ENCODE measurements at regions of chrX and their contacts with region 1.

Region 1: DNA sequence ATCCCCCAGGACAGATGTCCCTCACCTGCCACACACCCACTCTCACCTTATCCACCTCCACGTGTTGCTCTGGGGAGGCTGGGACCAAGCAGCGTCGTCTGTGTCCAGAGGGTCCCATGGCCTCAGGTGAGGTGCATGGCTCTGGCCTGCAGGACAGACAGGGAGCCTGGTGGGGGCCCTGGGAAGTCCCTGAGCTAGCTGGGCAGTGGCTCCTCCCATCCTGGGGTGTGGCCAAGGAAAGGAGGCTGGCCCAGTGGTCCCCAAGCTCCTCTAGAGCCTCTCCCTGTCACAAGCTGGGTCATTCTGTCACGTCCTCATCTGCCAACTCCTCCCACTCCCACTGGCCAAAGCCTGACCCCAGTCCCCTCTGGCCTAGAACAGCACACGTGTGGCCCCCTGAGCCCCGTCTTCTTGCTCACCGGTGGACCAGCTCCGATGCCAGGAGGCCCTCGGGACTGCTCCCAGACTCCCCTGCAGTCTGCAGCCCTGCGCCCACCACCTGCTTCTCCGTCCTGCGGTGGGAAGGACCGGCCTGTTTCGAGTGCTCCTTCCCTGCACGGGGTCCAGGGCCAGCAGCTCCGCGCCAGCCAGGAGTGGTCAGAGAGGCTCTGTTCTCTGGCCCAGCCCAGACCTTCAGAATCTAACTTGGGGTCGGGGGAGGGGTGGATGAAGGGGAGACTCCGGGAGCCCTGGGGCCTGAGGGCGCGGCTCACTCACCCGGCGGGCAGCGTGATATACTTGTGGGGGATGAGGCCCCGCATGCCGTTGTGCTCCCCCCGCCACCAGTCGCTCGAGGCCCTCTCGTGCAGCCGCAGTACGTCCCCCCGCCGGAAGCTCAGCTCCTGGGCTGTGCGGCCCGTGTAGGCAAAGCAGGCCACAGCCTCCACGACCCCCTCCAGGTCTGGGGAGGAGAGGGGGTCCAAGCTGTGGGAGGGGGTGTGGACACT is 4.8 kb downstream of the AVPR2 start:
- H3K4me3 ChIP-seq: no peak overlapping the region
- H3K27ac ChIP-seq: no peak overlapping the region
- H3K4me1 ChIP-seq: no peaks in the 10 kb centered on the region
- CTCF ChIP-seq: no peak

Region 2: DNA sequence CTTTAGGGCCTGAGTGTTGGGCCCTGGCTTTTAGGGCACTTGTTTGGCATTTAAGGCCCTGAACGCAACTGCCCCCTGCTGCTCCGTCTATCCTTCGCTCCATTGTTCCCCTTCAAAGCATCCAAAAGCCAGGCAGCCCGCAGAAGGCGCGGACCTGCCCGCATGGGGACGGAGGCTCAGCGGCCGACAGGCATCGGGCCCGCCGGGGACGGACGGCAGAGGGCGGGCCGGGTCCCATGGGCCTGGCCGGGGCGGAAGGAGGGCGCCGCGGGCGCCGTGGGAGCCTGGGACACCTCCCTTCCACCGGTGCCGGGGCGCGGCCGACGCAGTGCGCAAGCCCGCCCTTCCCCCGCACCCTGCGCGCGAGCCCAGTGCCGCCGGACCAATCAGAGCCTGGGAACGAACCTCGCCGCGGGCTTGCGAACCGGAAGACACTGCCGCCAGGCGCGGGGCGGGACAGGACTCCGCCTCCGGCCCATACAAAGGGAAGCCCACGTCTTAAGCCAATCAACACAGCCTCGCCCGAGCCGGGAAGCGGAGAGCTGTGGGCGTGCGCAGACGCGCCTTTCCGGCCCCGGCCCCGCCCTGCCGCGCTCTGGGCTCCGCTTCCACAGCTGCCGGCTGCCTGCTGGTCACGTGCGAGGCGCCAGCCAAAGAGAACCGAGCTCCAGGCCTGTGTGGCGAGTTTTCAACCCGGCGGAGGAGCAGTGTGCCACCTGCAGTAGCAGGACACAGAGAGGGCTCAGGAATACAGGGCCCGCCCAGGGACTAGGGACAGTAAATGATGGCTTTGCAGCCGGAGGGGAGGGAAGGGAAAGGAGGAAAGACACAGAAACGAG is 18.8 kb after region 1 on chrX:
- CTCF ChIA-PET with region 1: interaction called, 72 read pairs
- POLR2A ChIA-PET with region 1: interaction called, 8 read pairs
- H3K4me3 ChIP-seq: peak overlapping the region; percentile 66
- H3K27ac ChIP-seq: peak overlapping the region; percentile 95
- H3K4me1 ChIP-seq: peaks cover 10% of the 10 kb centered on the region
- CTCF ChIP-seq: peak; percentile 83

Region 3: DNA sequence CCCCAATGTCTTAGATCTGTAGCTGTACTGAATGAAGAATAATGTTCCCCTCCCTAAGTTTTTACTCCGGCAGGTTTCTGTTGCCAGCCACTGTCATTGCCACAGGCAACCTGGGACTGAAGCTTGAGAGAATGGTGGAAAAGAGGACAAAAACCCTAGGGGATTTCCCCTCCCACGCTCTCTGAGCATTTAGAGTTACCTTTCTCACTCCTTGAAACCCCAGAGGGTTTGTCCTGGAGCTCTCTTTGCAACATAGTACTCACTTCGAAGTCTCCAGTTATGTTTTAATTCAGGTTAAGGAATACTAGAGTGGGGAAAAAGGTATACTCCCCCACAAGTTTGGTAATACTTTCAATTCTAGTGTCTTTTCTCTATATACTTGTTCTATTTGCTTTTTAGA is 1081.7 kb after region 1 on chrX:
- CTCF ChIA-PET with region 1: no interaction called
- POLR2A ChIA-PET with region 1: no interaction called
- H3K4me3 ChIP-seq: no peak overlapping the region
- H3K27ac ChIP-seq: no peak overlapping the region
- H3K4me1 ChIP-seq: no peaks in the 10 kb centered on the region
- CTCF ChIP-seq: no peak

Measured in HEK293 (cell line).